Stomach (tissue), 19 donors: ENCODE measurements at regions of chr1 and their contacts with region 1.

Region 1: DNA sequence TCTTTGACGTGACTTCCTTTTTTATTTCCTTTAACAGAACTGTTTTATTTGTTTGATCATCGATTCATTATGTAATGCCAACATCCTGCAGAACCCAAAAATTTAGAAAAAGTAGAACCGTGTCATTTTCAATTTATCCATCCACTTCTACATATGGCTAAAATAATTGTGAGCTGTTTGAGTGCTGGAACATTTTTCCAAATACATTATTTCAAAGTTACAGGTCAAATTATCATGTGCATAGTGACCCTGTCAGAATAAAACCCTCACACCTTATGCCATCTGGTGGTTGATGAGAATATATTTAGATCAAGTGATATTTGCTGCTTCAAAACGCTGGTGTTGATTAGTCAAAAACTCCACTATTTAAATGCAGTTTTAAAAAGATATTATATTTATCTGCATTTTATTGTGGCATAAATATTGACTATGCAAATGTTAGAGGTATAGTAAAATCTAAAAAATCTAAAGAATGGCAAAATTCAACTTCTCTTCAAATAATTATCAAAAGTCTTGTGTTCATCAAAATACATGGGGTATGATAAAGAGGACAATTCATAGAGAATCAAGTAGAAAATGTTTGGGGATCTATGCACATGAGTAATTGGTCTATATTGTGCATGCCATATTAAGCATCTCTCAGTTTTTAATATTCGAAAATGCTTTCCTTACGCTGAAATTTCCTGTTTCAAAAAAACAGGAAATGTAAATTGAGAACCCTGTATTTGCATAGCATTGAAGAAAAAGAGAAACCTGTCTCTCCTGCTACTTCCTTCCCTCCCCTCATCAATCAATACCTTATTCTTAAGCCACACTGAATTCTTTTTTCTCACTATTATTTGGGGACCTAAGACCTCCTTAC is 39.7 kb downstream of the UBE2U start:
- DNase-seq: peak in 1 of 2 donors; percentile 69
- H3K4me3 ChIP-seq: no peak overlapping the region
- H3K27ac ChIP-seq: peak overlapping the region in 1 of 5 donors; percentile 40
- H3K4me1 ChIP-seq: peaks cover 4 to 40% (median 16%) of the 10 kb centered on the region in 4 donors
- H3K27me3 ChIP-seq: no peaks in the 10 kb centered on the region
- CTCF ChIP-seq: peak in 5 of 7 experiments; percentile 9 to 72 (median 45)
- EP300 ChIP-seq: no peak
- POLR2A ChIP-seq: no peak

Region 2: DNA sequence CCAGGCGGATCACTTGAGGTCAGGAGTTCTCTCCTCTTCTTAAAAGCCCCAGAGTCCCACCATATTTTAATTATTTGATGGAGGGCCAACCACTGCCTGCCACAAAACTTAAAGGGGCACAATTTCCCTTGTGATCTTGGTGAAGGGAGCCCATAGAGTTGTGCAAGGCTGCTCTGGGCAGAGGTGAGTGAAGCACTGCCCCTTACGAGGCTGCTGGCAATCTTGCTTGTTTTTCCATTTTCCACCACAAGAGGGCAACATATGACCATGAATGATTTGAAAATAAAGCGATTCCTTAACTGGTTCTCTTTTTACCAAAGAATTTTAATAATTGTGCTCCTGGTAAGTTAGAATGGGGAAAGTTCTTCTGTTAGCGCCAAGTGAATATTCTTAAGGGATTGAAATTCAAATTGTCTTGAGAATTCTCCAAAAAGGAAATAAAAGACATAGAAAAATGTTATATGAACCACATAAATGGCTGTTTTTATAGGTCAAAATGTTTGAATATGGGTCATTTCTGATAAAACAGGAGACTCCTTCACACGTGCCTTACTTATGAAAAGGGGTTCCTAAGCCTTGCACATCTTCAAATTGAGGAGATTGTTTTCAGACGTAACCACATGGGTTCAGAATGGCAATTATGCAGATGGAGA is 627.2 kb before region 1 on chr1:
- intact Hi-C with region 1: loop called (anchors 5 kb)
- DNase-seq: peak; percentile 65 to 87
- H3K4me3 ChIP-seq: no peak overlapping the region
- H3K27ac ChIP-seq: no peak overlapping the region
- H3K4me1 ChIP-seq: peaks cover 0 to 19% (median 14%) of the 10 kb centered on the region in 4 donors
- H3K27me3 ChIP-seq: no peaks in the 10 kb centered on the region
- CTCF ChIP-seq: peak in 6 of 7 experiments; percentile 11 to 87 (median 73)
- EP300 ChIP-seq: no peak
- POLR2A ChIP-seq: no peak

Region 3: GRCh38 chr1:63688302-63688890 is 554.7 kb before region 1 on chr1:
- intact Hi-C with region 1: loop called (anchors 10 kb)
- DNase-seq: no peak
- H3K4me3 ChIP-seq: no peak overlapping the region
- H3K27ac ChIP-seq: no peak overlapping the region
- H3K4me1 ChIP-seq: peaks cover 0 to 16% (median 11%) of the 10 kb centered on the region in 4 donors
- H3K27me3 ChIP-seq: no peaks in the 10 kb centered on the region
- CTCF ChIP-seq: no peak
- EP300 ChIP-seq: no peak
- POLR2A ChIP-seq: no peak

Region 4: GRCh38 chr1:64051796-64052195 is 191.3 kb before region 1 on chr1:
- intact Hi-C with region 1: no loop called
- DNase-seq: peak in 1 of 2 donors; percentile 65
- H3K4me3 ChIP-seq: no peak overlapping the region
- H3K27ac ChIP-seq: peak overlapping the region in 2 of 5 donors; percentile 12 to 35
- H3K4me1 ChIP-seq: peaks cover 0 to 25% (median 7%) of the 10 kb centered on the region in 4 donors
- H3K27me3 ChIP-seq: no peaks in the 10 kb centered on the region
- CTCF ChIP-seq: no peak
- EP300 ChIP-seq: no peak
- POLR2A ChIP-seq: no peak